ENCODE measurements at regions of chr17 and their contacts with region 1.

Region 1: GRCh38 chr17:28777178-28777577 is 33.4 kb downstream of the TRAF4 start:
- DNase-seq: no peak
- H3K4me3 ChIP-seq: no peak overlapping the region
- H3K27ac ChIP-seq: no peak overlapping the region
- H3K4me1 ChIP-seq: peaks cover 0 to 3% (median 0%) of the 10 kb centered on the region in 4 experiments; a peak in 1 of 7 replicates
- H3K27me3 ChIP-seq: no peaks in the 10 kb centered on the region
- CTCF ChIP-seq: no peak
- EP300 ChIP-seq: no peak
- POLR2A ChIP-seq: no peak
- RAD21 ChIP-seq: no peak

Region 2: DNA sequence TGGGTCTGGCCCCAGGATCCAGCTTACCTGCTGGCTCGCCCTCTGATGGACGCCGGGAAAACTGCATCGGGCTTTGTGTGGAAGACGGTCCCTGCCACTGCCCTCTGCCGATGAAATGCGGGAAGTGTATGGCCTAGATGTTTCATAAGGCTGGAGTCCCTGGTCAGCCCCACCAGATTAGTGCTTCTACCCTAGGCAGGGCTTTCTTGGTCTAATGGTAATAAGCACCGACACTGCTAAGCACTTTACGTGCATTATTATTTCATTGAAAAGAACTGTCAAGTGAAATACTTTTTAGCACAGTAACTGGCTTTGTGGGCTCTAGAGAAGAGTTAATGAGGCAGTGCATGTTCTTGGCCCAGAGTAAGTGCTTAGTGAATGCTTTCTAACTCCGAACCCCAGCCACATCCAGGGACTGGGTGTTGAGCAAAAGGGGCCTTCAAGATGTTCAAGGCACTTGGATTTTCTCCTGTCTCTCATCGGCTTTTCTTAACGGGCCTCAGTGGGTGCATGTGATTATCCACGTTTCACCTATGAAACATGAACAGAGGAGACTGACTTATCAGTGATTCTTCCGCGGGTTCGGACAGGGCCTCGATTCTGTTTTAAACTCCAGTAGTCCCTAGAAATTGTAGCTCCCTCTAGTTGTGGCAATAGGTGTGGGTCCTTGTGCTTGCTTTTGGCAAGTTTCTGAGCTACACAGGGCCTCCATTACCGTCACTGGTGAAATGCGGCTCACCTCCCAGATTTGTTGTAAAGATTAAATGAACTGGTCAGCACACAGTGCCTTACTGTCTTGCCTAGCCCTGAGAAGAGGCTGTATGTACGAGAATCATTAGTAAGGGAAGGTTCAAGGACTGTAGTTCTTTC is 26.8 kb before region 1 on chr17:
- CTCF ChIA-PET with region 1: interaction called, 11 read pairs
- POLR2A ChIA-PET with region 1: interaction called, 7 read pairs
- DNase-seq: peak in 1 of 2 experiments; percentile 96
- H3K4me3 ChIP-seq: no peak overlapping the region
- H3K27ac ChIP-seq: no peak overlapping the region
- H3K4me1 ChIP-seq: peaks cover 0 to 30% (median 24%) of the 10 kb centered on the region in 4 experiments; a peak in 6 of 7 replicates
- H3K27me3 ChIP-seq: no peaks in the 10 kb centered on the region
- CTCF ChIP-seq: peak; percentile 98 to 100 (median 100)
- EP300 ChIP-seq: 0 out of 3 replicates have a peak, but pooled peaks of 1 of the 2 experiments have one; percentile 5
- POLR2A ChIP-seq: peak in 1 of 2 experiments; percentile 73; a peak in 2 of 3 replicates
- RAD21 ChIP-seq: peak; percentile 71 to 81

Measured in H1 (cell line).